Adrenal gland (tissue), 19 donors: ENCODE measurements at regions of chr2 and their contacts with region 1.

Region 1: DNA sequence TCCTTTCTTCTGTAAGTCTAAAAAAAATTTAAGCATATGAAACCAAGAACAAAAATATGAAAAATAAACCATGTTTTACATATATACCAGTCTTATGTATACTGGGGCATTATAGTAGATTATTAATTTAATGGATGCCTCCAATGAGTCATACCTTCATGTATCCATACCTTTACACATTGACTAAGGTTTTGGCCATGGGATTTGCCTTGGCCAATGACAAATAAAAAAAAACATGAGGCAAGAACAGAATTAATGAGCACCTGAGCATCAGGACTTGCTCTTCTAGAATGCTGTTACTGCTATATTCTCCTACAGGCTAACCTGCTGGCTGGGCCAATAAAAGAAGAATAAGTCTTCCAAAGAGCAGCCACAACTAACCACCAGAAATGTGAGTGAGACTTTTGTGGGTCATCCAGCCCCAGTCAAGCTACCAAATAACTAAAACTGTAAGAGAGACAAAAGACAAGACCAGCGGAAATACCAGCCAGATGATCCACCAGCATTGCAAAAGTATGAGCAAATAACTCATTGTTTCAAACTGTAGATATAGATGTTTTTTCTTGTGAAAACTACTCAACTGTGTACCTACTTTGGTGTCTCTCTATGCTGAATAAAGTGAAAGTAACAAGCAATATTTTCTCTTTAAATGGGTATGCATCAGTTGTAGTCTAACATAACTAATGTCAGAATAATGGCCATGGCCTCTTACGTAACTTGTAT is 749.6 kb upstream of the VRK2 start:
- DNase-seq: no peak
- H3K4me3 ChIP-seq: no peak overlapping the region
- H3K27ac ChIP-seq: no peak overlapping the region
- H3K4me1 ChIP-seq: no peaks in the 10 kb centered on the region
- H3K27me3 ChIP-seq: no peaks in the 10 kb centered on the region
- CTCF ChIP-seq: no peak
- POLR2A ChIP-seq: no peak

Region 2: DNA sequence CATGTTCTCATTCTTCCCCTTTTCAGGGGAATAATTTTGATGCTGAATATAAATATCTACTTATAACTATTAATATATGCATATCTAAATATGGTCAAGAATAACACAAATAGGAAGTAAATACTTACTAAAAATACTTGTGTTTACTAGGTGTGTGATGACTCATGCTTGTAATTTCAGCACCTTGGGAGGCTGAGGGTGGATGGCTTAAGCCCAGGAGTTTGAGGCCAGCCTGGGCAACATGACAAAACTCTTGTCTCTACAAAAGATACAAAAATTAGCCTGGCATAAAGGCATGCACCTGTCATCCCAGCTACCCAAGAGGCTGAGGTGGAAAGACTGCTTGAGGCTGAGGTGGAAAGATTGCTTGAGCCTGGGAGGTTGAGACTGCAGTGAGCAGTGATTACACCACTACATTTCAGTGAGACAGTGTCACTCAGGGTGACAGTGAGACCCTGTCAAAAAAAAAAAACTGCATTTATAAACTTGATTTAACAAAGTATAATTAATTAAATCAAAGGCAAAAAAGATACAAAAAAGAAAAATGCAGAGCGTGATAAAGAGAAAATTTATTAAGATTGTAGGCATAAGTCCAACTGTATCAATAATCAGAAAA is 46.5 kb after region 1 on chr2:
- intact Hi-C with region 1: loop called in 1 of 2 experiments (anchors 10 kb)
- DNase-seq: no peak
- H3K4me3 ChIP-seq: no peak overlapping the region
- H3K27ac ChIP-seq: no peak overlapping the region
- H3K4me1 ChIP-seq: no peaks in the 10 kb centered on the region
- H3K27me3 ChIP-seq: no peaks in the 10 kb centered on the region
- CTCF ChIP-seq: no peak
- POLR2A ChIP-seq: no peak

Region 3: DNA sequence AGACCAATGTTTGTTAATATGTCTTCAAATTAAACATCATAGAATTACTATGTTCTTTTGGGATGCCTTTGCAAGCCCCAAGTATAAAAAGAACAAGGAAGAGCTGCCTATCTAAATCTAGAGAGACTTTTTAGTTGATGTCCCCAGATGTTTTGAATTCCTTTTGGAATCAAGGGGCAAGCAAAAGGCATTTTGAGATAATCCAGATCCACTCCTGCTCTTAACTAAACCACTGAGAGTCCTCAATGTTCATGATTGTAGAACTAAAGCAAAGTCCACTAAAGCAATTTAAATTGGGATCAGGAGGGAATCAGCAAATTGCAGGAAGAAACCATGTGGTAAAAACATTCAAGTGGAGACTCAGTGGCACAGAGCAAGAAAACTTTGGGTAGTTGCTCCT is 191.1 kb after region 1 on chr2:
- intact Hi-C with region 1: no loop called
- DNase-seq: no peak
- H3K4me3 ChIP-seq: no peak overlapping the region
- H3K27ac ChIP-seq: no peak overlapping the region
- H3K4me1 ChIP-seq: no peaks in the 10 kb centered on the region
- H3K27me3 ChIP-seq: no peaks in the 10 kb centered on the region
- CTCF ChIP-seq: no peak
- POLR2A ChIP-seq: no peak